Colonic mucosa (tissue), 4 donors: ENCODE measurements at regions of chr13 and their contacts with region 1.

Region 1: DNA sequence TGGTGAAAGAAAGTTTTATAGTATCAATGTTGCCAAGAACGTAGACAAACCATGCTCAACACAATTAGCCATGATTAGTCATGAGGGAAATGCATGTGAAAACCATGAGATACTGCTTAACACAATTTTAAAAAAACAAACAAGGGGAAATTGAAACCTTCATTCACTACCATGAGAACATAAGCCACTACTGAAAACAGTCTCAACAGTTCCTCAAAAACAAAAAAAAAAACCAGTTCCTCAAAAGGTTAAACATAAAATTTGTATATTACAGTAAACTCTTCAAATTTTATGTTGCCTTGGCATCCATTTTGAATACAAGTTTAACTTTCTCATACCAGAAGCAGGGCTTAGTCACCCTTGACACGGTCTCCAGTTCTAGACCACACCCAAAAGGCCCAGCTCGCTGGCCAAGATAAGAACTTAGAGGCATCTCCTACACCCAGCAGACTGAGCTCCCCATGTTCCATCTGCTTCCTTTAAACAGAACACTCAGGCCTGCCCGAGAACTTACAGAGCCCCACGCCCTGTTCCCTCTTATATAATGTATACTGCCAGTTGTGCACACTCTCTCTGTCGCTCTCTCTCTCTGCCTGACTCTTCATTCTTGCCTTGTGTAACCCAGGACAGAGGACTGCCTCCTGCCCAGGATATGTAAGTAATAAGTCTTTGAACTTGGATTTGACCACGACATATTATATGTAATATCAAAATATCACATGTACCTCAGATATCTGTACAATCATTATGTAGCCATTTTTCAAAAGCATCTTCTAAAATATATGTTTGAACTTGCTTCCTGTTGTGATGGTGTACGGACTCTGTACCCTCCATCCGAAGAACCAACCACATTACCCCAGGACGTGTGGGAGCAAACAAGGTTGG is 67.4 kb downstream of the STK24 start:
- DNase-seq: peak; percentile 78
- H3K4me3 ChIP-seq: no peak overlapping the region
- H3K27ac ChIP-seq: peak overlapping the region; percentile 60
- H3K4me1 ChIP-seq: peaks cover 28% of the 10 kb centered on the region
- H3K27me3 ChIP-seq: no peaks in the 10 kb centered on the region
- CTCF ChIP-seq: no peak

Region 2: GRCh38 chr13:98576963-98577822 is 67.7 kb after region 1 on chr13 and contains the start of gene STK24:
- intact Hi-C with region 1: loop called (anchors 10 kb)
- DNase-seq: peak; percentile 72
- H3K4me3 ChIP-seq: peak within 1 kb of the TSS; percentile 86
- H3K27ac ChIP-seq: peak within 1 kb of the TSS; percentile 94
- H3K4me1 ChIP-seq: peaks cover 12% of the 10 kb centered on the region
- H3K27me3 ChIP-seq: no peaks in the 10 kb centered on the region
- CTCF ChIP-seq: no peak
- total RNA-seq, gene STK24: 160 to 206 TPM

Region 3: DNA sequence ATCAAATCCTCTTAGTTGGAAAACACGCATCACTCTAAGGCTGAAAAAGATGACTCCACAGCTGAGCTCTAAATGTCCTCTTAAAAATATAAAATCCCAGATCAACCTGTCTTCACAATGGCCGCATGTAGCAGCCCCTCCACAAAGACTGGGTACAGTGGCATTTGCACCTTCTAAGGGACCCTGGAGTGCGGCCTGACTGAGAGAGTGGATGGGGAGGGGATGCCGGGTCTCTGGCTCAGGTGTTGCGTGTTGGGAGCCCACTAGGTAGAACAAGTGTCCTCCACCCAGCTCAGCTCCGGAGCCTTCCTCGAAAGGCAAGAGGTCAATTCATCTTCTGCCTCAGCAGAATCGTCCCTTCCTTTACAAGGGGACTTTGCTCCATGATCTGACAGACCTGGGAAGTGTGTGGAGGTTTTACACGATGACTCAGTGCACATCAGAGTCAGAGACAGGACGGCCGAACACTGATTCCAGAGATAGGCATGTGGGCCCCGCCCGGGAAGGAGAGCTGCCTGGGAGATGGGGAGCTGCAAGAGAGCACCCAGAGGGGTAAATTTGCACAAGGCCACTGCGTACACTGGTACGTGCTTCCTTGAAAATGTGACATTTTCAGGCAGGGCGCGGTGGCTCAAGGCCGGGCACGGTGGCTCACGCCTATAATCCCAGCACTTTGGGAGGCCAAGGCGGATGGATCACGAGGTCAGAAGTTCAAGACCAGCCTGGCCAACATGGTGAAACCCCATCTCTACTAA is 266.5 kb after region 1 on chr13:
- intact Hi-C with region 1: no loop called
- DNase-seq: peak; percentile 86
- H3K4me3 ChIP-seq: no peak overlapping the region
- H3K27ac ChIP-seq: no peak overlapping the region
- H3K4me1 ChIP-seq: no peaks in the 10 kb centered on the region
- H3K27me3 ChIP-seq: no peaks in the 10 kb centered on the region
- CTCF ChIP-seq: no peak